AG04449 (cell line): ENCODE measurements at regions of chr5 and their contacts with region 1.

Region 1: GRCh38 chr5:120473332-120473731 is 9.2 kb downstream of the PRR16 start:
- DNase-seq: no peak
- H3K4me3 ChIP-seq: no peak overlapping the region
- CTCF ChIP-seq: no peak

Region 2: GRCh38 chr5:120504057-120504456 is 30.7 kb after region 1 on chr5:
- CTCF ChIA-PET with region 1: no interaction called
- POLR2A ChIA-PET with region 1: no interaction called
- DNase-seq: no peak
- H3K4me3 ChIP-seq: no peak overlapping the region
- CTCF ChIP-seq: no peak

Region 3: DNA sequence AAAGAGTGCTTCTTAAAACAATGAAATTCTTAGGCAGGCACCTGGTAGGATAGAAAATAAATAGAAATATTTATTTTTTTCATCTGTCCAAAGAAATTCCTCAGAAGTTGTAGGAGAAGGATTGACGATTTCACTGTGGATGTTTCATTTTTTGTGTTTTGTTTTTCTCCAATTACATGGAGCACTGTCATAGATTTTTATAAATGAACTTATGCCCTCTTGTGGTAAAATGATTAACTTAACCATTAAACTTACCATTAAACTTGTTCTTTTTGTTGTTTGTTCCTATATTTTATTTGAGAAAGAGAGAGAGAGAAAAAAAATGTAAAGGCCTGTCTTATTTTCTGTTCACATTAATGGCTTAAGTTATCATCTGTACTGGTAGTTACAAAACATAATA is 329.9 kb after region 1 on chr5:
- CTCF ChIA-PET with region 1: interaction called, 11 read pairs
- POLR2A ChIA-PET with region 1: no interaction called
- DNase-seq: no peak
- H3K4me3 ChIP-seq: no peak overlapping the region; the same call in 1 of the 2 replicates
- CTCF ChIP-seq: no peak